A549 (cell line): ENCODE measurements at regions of chr5 and their contacts with region 1.

Region 1: DNA sequence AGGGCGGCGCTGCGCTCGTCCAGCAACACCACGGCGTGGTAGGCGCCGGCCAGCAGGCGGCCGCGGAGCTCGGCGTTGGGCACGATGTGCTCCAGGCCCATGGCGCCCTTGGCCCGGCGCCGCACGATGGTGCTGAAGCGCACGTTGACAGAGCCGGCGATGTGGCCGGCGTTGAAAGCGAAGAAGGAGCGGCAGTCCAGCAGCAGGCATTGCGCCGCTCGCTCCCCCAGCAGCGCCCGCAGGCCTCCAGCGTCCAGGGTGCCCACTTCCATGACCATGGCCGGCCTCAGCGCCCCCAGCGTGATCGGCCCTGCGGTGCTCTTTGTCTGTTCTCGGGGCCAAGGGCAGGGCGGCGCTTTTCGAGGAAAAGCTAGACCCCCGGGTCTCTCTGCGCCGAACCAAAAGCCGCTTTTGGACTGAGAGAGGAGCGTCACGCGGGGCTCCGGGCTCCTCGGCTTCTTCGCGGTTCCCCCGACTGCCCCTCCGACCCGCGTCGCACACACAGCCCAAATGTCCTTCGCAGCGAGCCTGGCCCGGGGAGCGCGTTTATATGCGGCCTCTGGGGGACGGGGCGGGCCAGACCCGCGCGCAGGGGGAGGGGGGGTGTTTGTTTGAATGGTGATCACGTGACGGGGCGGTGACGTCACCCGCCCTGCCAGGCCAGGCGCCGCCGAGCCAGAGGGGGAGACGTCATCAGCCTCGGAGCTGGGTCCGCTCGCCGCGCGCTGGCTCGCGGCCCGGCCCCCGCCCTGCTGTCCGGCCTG is at the start of gene DUSP1:
- DNase-seq: peak; percentile 92 to 99
- ATAC-seq: peak; percentile 32 to 50
- H3K4me3 ChIP-seq: peak within 1 kb of the TSS; percentile 75
- H3K27ac ChIP-seq: peak within 1 kb of the TSS; percentile 97 to 100
- H3K4me1 ChIP-seq: peaks cover 42% of the 10 kb centered on the region
- CTCF ChIP-seq: peak; percentile 27; the same call in 1 of the 3 replicates
- EP300 ChIP-seq: peak; percentile 89 to 96
- POLR2A ChIP-seq: peak; percentile 99
- RAD21 ChIP-seq: peak; percentile 8 to 52
- polyA plus RNA-seq, gene DUSP1: 525 and 594 TPM in 2 replicates

Region 2: DNA sequence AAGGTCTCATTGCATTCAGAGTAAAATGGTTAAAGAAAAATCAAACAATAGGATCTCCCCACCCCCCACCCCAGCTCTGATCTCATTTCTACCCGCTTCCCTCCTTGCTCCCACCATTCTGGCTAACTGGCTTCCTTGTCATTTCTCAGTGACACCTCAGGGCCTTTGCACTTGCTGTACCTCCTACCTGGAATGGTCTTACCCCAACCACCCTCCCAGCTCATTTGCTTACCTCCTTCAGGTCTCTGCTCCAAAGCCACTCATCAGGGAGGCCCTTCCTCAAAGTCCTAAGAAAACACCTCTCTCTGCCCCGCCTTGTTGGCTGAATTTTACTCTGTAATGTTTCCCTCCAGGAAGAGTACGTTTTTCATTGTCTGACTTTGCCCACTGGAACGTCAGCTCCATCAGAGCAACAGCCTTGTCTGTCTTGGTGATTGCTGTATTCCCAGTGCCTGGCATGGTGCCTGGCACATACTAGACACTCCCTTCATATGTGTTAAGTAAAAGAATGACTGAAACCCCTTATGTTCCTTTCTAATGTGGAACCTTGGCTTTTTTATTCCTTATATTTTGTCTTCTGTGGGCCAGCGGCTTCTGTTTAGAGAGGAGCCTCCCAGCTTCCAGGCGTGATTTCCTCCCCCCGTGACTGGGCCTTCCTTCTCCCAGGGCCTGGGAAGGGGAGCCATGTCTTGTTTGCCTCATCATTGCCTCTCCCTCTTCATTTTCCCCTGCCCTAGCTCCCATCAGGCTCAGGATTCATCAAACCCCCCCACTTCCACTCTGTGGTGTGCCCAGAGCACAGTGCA is 102.9 kb before region 1 on chr5:
- CTCF ChIA-PET with region 1: no interaction called
- POLR2A ChIA-PET with region 1: no interaction called
- DNase-seq: no peak
- ATAC-seq: no peak
- H3K4me3 ChIP-seq: no peak overlapping the region
- H3K27ac ChIP-seq: no peak overlapping the region
- H3K4me1 ChIP-seq: no peaks in the 10 kb centered on the region
- CTCF ChIP-seq: no peak
- EP300 ChIP-seq: no peak
- POLR2A ChIP-seq: no peak
- RAD21 ChIP-seq: no peak

Region 3: GRCh38 chr5:172785429-172786088 is 14.7 kb after region 1 on chr5:
- CTCF ChIA-PET with region 1: interaction called, 10 read pairs
- POLR2A ChIA-PET with region 1: interaction called, 3 read pairs
- DNase-seq: no peak
- ATAC-seq: no peak
- H3K4me3 ChIP-seq: no peak overlapping the region
- H3K27ac ChIP-seq: peak overlapping the region; percentile 37 to 85; a peak in 5 of 6 replicates
- H3K4me1 ChIP-seq: peaks cover 52% of the 10 kb centered on the region
- CTCF ChIP-seq: no peak
- EP300 ChIP-seq: no peak
- POLR2A ChIP-seq: no peak
- RAD21 ChIP-seq: no peak

Region 4: DNA sequence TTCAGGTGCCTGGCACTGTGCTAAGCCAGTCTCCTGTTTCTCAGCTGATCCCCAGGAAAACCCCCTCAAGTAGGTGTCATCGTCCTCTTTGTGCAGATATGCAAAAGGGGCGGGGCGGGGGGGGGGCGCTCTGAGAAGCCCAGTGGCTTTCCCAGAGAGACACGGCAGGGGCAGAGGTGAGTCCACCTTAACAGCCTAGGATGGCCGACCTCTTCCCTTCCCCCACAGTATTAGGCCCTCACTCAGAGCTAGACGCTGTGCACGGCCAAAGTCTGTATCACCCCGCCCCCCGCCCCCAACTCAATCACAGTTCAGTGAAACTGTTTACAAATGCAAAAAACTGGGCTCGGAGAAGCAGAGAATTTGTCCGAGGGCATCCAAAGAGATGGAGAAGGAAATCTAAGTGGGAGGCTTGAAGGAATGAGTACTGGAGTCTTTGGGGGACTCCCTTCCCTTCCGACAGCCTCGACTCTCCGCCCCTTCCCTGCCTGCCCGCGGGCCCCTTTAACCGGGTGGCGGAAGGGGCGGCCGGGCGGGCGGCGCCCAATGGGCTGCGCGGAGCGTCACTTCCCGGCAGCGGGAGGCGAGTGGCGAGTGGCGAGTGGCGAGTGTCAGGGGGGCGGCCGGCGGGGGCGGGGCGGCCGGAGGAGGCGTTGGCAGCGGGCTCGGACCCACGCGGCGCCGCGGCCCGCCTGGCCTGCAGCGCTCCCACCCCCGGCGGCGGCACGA is 63.0 kb after region 1 on chr5 and contains the start of gene ERGIC1:
- CTCF ChIA-PET with region 1: interaction called, 22 read pairs
- POLR2A ChIA-PET with region 1: interaction called, 10 read pairs
- DNase-seq: peak; percentile 64 to 84
- ATAC-seq: peak; percentile 91 to 93
- H3K4me3 ChIP-seq: peak within 1 kb of the TSS; percentile 99
- H3K27ac ChIP-seq: peak within 1 kb of the TSS; percentile 96 to 99
- H3K4me1 ChIP-seq: peaks cover 46% of the 10 kb centered on the region
- CTCF ChIP-seq: no peak
- EP300 ChIP-seq: peak in 1 of 2 experiments; percentile 22; a peak in 1 of 5 replicates
- POLR2A ChIP-seq: peak; percentile 65
- RAD21 ChIP-seq: 0 out of 5 replicates have a peak, but pooled peaks of 1 of the 2 experiments have one; percentile 9
- polyA plus RNA-seq, gene ERGIC1: 176 and 208 TPM in 2 replicates

Region 5: DNA sequence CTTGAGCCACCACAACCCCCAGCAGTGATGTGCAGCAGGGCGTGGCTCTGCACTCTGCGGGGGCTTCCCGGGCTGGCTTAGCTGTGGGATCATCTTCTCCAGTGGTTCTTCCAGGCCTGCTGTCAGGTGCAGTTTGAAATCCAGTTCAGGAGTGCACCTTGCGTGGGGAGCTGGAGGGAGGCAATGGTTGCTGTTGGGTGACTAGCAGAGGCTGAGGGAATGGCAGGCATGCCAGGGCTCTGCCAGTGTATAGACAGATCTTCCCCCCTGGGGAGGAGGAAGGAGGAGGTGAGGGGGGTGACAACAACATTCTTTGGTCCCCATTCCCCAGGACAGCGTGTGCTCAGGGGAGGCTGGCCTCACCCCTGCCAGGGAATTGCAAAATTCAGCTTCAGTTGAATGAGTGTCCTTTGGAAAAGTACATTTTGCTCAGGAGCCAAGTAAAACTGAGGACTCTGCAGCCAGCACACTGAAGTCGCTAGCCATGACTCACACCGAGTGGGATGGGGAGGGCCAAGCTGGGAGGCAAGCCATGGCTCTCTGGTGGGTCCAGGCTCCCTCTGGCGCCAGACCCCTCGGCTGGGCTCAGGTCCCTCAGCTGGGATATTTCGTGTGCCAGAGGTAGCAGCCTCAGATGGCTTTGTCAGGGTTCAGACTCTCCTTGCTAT is 98.2 kb after region 1 on chr5:
- CTCF ChIA-PET with region 1: interaction called, 7 read pairs
- POLR2A ChIA-PET with region 1: interaction called, 61 read pairs
- DNase-seq: peak; percentile 83 to 93
- ATAC-seq: peak; percentile 79 to 80
- H3K4me3 ChIP-seq: 0 out of 3 replicates have a peak overlapping the region, but pooled peaks have one; percentile 18
- H3K27ac ChIP-seq: peak overlapping the region; percentile 96 to 99
- H3K4me1 ChIP-seq: peaks cover 95% of the 10 kb centered on the region
- CTCF ChIP-seq: no peak; the same call in 2 of the 3 replicates
- EP300 ChIP-seq: peak; percentile 91 to 95; a peak in 4 of 5 replicates
- POLR2A ChIP-seq: no peak
- RAD21 ChIP-seq: peak; percentile 55 to 70

Region 6: GRCh38 chr5:172910828-172911627 is 140.2 kb after region 1 on chr5:
- CTCF ChIA-PET with region 1: interaction called, 131 read pairs
- POLR2A ChIA-PET with region 1: interaction called, 29 read pairs
- DNase-seq: peak; percentile 67 to 96
- ATAC-seq: peak; percentile 85 to 91
- H3K4me3 ChIP-seq: no peak overlapping the region
- H3K27ac ChIP-seq: peak overlapping the region; percentile 98 to 100
- H3K4me1 ChIP-seq: peaks cover 68% of the 10 kb centered on the region
- CTCF ChIP-seq: peak; percentile 70
- EP300 ChIP-seq: peak; percentile 98 to 99
- POLR2A ChIP-seq: no peak
- RAD21 ChIP-seq: peak; percentile 82 to 87

Region 7: GRCh38 chr5:172932313-172933017 is 161.6 kb after region 1 on chr5:
- CTCF ChIA-PET with region 1: interaction called, 25 read pairs
- POLR2A ChIA-PET with region 1: interaction called, 47 read pairs
- DNase-seq: peak; percentile 76 to 86
- ATAC-seq: peak; percentile 66 to 81
- H3K4me3 ChIP-seq: no peak overlapping the region
- H3K27ac ChIP-seq: peak overlapping the region; percentile 98 to 100
- H3K4me1 ChIP-seq: peaks cover 47% of the 10 kb centered on the region
- CTCF ChIP-seq: peak; percentile 89
- EP300 ChIP-seq: no peak
- POLR2A ChIP-seq: no peak
- RAD21 ChIP-seq: peak; percentile 92 to 97

Region 8: GRCh38 chr5:173242675-173243121 is 471.8 kb after region 1 on chr5:
- CTCF ChIA-PET with region 1: no interaction called
- POLR2A ChIA-PET with region 1: no interaction called
- DNase-seq: no peak
- ATAC-seq: peak in 1 of 2 experiments; percentile 13; a peak in 1 of 6 replicates
- H3K4me3 ChIP-seq: no peak overlapping the region
- H3K27ac ChIP-seq: no peak overlapping the region
- H3K4me1 ChIP-seq: no peaks in the 10 kb centered on the region
- CTCF ChIP-seq: no peak
- EP300 ChIP-seq: no peak
- POLR2A ChIP-seq: no peak
- RAD21 ChIP-seq: no peak